ENCODE measurements at regions of chr6 and their contacts with region 1.

Region 1: GRCh38 chr6:136226027-136226673 is 24.0 kb downstream of the MTFR2 start:
- DNase-seq: peak in 1 of 2 donors; percentile 75
- H3K4me3 ChIP-seq: peak overlapping the region; percentile 18 to 41
- H3K27ac ChIP-seq: no peak overlapping the region
- H3K4me1 ChIP-seq: no peaks in the 10 kb centered on the region
- H3K27me3 ChIP-seq: no peaks in the 10 kb centered on the region
- CTCF ChIP-seq: peak; percentile 95 to 100 (median 100)

Region 2: GRCh38 chr6:135451693-135452092 is 774.5 kb before region 1 on chr6:
- intact Hi-C with region 1: loop called (anchors 5 kb)
- DNase-seq: no peak
- H3K4me3 ChIP-seq: no peak overlapping the region
- H3K27ac ChIP-seq: no peak overlapping the region
- H3K4me1 ChIP-seq: no peaks in the 10 kb centered on the region
- H3K27me3 ChIP-seq: no peaks in the 10 kb centered on the region
- CTCF ChIP-seq: peak; percentile 19 to 80 (median 78)

Region 3: DNA sequence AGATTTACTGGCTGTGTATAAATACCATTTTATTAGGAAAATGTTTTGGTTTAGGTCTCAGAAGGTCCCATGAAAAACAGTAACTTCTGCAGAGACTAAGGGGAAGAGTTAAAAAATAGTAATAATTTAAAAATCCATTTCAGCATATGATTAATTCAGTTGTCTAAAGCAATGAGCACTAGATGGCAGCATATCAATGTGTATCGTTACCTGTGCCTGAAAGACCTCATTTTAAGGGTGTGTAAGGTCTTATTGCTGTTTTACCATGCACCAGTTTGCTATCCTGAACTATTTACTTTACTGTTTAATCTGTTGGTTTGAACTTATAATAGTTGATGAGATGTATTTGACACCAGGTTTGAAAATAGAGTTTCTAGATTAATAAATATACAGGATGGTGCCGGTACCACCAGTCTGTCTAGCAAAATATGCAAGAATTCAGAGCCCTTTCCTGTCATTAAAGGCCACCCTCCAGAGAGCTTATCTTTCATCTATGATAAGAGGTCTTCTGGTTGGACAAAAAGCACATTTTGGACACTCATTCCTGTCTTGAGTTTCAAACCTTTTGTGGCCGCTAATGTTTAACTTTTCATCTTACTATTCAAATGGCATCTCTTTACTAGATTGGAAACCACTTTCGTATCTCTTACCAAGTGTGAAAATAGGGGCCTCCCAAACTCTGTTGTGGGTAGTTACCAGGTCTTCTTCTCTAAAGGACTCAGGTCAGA is 719.7 kb before region 1 on chr6:
- intact Hi-C with region 1: loop called (anchors 2 kb)
- DNase-seq: no peak
- H3K4me3 ChIP-seq: no peak overlapping the region
- H3K27ac ChIP-seq: no peak overlapping the region
- H3K4me1 ChIP-seq: no peaks in the 10 kb centered on the region
- H3K27me3 ChIP-seq: no peaks in the 10 kb centered on the region
- CTCF ChIP-seq: peak; percentile 19 to 52 (median 43)

Region 4: DNA sequence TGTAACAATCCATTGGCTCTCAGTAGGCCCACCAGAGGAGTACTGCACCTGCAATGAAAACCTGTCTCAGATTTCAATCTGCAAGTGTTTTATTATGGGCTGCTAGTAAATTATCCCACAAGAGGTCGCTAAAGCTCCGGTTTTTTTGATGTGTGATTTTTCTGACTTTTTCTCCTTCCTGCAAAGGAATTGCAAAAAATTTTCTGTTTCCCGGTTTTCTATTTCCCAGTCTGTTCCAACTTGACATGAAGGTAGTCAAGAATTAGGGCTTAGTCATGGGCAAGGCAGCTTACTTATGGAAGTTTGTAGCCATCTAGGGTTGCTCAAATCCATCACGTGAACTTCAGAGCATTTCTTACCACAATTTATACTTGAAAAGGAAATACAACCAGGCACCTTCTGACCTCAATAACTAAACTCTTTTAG is 690.1 kb before region 1 on chr6:
- intact Hi-C with region 1: loop called (anchors 1 kb)
- DNase-seq: no peak
- H3K4me3 ChIP-seq: no peak overlapping the region
- H3K27ac ChIP-seq: no peak overlapping the region
- H3K4me1 ChIP-seq: no peaks in the 10 kb centered on the region
- H3K27me3 ChIP-seq: no peaks in the 10 kb centered on the region
- CTCF ChIP-seq: peak in 2 of 3 experiments; percentile 15 to 58

Region 5: DNA sequence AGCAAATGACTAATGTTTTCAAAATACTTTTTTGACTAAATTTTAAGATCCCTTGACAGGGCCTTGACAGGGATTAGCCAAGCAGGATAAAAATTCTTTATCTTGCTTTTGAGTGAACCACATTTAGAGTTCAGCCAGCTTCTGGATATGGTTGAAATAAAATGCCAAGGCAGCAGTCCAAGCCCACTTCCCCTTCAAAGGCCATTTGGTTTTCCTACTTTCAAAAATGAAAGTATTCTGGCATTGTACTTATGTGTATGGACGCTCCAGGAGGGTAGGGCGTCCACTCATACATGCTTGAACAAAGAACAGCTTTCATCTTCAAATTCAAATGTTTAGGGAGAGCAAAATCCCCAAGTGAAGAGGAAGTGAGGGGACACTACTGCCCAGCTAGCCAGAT is 145.8 kb after region 1 on chr6:
- intact Hi-C with region 1: no loop called
- DNase-seq: no peak
- H3K4me3 ChIP-seq: no peak overlapping the region
- H3K27ac ChIP-seq: no peak overlapping the region
- H3K4me1 ChIP-seq: no peaks in the 10 kb centered on the region
- H3K27me3 ChIP-seq: no peaks in the 10 kb centered on the region
- CTCF ChIP-seq: no peak

Measured in ascending aorta (tissue), 2 donors.